ENCODE measurements at regions of chr11 and their contacts with region 1.

Region 1: DNA sequence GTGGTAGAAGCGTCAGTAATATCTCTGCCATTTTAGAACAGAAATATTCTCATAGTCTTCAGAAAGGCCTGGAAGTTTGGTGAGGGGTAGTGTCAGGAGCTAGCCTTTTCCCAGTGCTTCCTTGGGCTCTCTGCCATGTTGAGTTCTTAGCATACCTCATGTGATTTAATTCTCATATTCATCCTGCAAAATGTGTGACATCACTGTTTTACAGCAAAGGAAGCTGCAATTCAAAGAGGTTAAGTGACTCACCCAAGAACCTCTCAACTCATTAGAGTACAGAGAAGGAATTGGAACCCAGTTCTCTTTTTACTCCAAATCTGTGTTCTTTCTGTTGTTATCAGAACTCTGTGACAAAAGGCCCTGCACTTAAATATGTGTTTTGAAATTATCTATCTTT is 72.1 kb downstream of the RNF169 start:
- DNase-seq: peak; percentile 93
- H3K4me3 ChIP-seq: peak overlapping the region in 1 of 3 experiments; percentile 17
- H3K27ac ChIP-seq: peak overlapping the region; percentile 92
- H3K4me1 ChIP-seq: peaks cover 58% of the 10 kb centered on the region
- H3K27me3 ChIP-seq: no peaks in the 10 kb centered on the region
- CTCF ChIP-seq: no peak
- POLR2A ChIP-seq: no peak

Region 2: GRCh38 chr11:74683279-74683871 is 137.4 kb before region 1 on chr11:
- CTCF ChIA-PET with region 1: no interaction called
- POLR2A ChIA-PET with region 1: no interaction called
- dilution Hi-C with region 1: no loop called
- intact Hi-C with region 1: no loop called
- DNase-seq: peak; percentile 41
- H3K4me3 ChIP-seq: peak overlapping the region; percentile 27 to 31 (median 29)
- H3K27ac ChIP-seq: no peak overlapping the region
- H3K4me1 ChIP-seq: peaks cover 4% of the 10 kb centered on the region
- H3K27me3 ChIP-seq: no peaks in the 10 kb centered on the region
- CTCF ChIP-seq: peak; percentile 38 to 70
- POLR2A ChIP-seq: no peak

Region 3: GRCh38 chr11:74748211-74749127 is 72.3 kb before region 1 on chr11 and contains the start of gene RNF169:
- CTCF ChIA-PET with region 1: no interaction called
- POLR2A ChIA-PET with region 1: no interaction called
- dilution Hi-C with region 1: no loop called
- intact Hi-C with region 1: loop called (anchors 2 kb)
- DNase-seq: peak; percentile 98
- H3K4me3 ChIP-seq: peak within 1 kb of the TSS; percentile 49 to 84 (median 70)
- H3K27ac ChIP-seq: peak within 1 kb of the TSS; percentile 88
- H3K4me1 ChIP-seq: peaks cover 22% of the 10 kb centered on the region
- H3K27me3 ChIP-seq: peaks cover 0 to 2% of the 10 kb centered on the region in 2 experiments
- CTCF ChIP-seq: no peak
- POLR2A ChIP-seq: peak; percentile 90
- total RNA-seq, gene RNF169: 17.3 and 21.3 TPM in 2 replicates

Region 4: GRCh38 chr11:74783241-74783871 is 37.4 kb before region 1 on chr11:
- CTCF ChIA-PET with region 1: interaction called, 3 read pairs
- POLR2A ChIA-PET with region 1: no interaction called
- dilution Hi-C with region 1: no loop called
- intact Hi-C with region 1: loop called (anchors 5 kb)
- DNase-seq: peak; percentile 79
- H3K4me3 ChIP-seq: peak overlapping the region in 1 of 3 experiments; percentile 37
- H3K27ac ChIP-seq: peak overlapping the region; percentile 77
- H3K4me1 ChIP-seq: peaks cover 27% of the 10 kb centered on the region
- H3K27me3 ChIP-seq: no peaks in the 10 kb centered on the region
- CTCF ChIP-seq: no peak
- POLR2A ChIP-seq: no peak

Region 5: GRCh38 chr11:74839971-74840370 is 19.2 kb after region 1 on chr11:
- CTCF ChIA-PET with region 1: no interaction called
- POLR2A ChIA-PET with region 1: no interaction called
- dilution Hi-C with region 1: no loop called
- intact Hi-C with region 1: loop called (anchors 2 kb)
- DNase-seq: peak; percentile 58
- H3K4me3 ChIP-seq: no peak overlapping the region
- H3K27ac ChIP-seq: peak overlapping the region; percentile 33
- H3K4me1 ChIP-seq: peaks cover 23% of the 10 kb centered on the region
- H3K27me3 ChIP-seq: no peaks in the 10 kb centered on the region
- CTCF ChIP-seq: no peak
- POLR2A ChIP-seq: no peak

Measured in endothelial cell of umbilical vein (primary cell).